Posterior vena cava (tissue), 2 donors: ENCODE measurements at regions of chr22 and their contacts with region 1.

Region 1: DNA sequence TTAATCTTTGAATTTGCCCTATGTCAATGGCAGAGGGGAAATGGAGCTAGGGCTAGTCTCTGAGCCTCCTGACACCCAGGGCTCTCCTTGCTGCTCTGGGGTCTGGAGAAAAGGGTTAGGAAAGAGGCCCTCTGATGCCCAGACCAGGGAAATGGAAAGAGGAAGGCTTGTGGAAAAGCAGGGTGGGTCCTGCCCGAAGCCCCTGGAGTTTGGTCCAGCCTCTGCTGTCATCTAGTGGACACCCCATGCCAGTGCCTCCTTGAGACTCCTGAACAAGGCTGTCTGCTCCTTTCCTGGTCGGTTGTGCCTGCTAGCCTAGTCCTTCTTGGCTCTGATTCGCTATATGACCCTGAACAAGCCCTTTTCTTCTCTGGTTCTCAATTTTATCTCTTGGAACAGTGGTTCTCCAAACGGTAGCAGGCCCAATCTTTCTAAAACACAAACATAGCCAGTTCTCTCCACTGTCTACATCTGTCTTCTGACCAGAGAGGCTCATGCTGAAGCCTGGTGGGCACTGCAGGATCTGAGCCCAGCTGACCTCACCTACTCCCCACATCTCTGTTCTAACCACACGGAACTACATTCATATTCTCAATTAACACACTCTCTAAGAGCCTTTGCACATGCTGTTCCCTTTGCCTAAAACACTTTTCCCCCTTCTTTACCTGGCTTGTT is 8.8 kb upstream of the PLA2G3 start:
- DNase-seq: peak; percentile 69

Region 2: DNA sequence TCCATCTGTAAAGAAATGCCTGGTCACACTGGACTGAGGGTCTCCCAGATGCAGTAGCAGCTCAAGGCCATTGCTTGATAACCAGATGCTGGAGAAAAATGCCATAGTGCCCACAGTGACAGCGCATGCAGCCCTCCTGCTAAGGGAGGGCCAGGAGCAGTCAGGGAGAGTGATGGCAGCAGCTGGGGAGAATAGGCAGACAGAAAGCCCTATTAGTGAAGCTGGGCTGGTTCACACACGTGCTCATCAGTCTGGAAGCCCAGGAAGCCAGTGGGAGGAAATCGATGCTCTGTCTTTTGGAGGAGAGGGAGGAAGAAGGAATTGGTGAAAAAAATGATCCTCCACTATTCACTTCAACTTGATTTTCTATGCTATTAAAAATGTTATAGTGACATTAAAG is 371.5 kb before region 1 on chr22:
- intact Hi-C with region 1: loop called in 1 of 2 experiments (anchors 10 kb)
- DNase-seq: no peak

Region 3: GRCh38 chr22:31107178-31107893 is 41.8 kb before region 1 on chr22 and contains the start of gene SELENOM:
- intact Hi-C with region 1: loop called in 1 of 2 experiments (anchors 5 kb)
- DNase-seq: peak; percentile 99
- total RNA-seq, gene SELENOM: 535 to 575 TPM

Region 4: DNA sequence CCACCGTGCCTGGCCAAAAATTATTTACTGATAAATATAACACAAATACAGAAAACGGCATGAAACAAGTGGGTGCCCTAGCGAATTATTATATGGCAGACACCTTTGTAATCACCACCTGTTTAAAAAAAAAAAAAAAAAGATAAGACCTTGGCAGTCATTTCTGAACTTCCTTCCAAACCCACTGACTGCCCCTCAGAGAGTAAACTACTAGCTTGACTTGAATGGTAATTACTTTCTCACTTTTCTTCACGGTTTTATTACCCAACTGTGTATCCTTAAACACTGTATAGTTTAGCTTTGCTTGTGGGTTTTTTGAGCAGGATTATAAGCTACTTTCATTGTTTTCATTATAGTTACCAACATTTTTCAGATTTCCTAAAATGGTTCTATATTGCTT is 371.0 kb after region 1 on chr22:
- intact Hi-C with region 1: no loop called
- DNase-seq: no peak

Region 5: DNA sequence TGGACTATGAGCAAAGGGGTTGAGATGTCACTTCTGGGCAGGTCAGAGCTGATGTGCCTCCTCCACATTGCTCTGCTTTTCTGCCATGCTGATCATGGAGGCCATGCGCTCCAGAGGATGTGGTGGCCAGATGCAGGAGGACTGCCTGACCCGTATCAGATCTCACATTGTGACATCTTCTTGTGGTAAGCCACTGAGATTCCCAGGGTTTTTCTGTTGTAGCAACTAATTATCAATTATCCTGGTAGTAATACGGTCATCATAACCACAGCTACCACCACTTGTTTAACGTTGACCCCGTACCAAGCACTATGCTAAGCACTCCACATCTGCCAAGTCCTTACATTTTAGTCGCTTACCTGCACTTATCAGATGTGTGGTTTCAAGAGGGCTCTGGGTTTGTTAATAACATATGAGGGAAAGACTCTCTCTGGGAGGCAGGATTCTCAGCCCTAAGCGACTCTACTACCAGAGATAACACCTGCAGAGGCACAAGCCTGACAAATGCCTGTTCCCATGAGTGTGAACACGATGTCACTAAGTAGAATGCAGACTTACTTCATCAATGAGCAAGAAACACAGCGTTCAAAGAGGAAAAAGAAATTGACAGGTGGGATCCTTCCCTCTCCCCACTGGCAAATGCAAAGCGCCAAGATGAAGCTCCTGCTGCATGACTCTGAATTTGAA is 1588.9 kb after region 1 on chr22:
- intact Hi-C with region 1: no loop called
- DNase-seq: no peak